Vagina (tissue), 2 donors: ENCODE measurements at regions of chr11 and their contacts with region 1.

Region 1: DNA sequence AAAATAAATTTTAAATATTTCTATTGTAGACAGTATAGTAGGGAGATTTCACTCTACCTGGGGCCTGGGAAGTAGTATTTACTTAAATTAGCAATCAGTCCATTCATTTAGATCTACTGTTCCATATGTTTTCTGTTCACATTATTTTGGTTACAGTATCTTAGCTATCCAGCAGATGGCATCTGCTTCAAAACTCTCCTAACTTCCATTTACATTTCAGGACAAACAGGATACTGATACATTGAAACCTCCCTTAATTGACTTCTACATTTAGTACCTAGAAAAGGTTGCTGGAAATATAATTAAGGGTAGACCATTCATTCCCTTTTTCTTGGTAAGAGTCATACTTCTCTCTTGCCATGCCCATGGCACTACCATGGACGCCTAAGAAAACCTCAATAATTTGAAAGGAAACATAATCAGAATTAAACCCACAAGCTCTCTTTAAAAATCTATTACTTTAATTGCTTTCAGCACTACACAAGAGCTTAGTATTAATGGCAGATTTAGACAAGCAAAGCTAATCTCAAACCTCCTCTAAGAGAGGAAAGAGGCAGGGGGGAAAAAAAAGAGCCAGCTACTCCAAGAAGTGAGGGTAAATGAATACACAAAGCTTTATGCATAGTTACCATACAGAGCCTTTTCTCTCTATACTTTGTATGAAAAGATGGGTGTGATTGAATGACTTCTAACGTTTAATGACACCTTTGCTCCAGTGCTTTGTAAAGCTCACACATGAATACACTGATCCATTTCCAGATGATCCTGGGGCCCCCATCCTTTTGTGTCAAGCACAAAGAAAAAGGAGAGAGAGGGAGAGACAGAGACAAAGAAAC is 131.2 kb upstream of the MTMR2 start:
- DNase-seq: no peak
- H3K4me3 ChIP-seq: no peak overlapping the region
- H3K27ac ChIP-seq: no peak overlapping the region
- H3K4me1 ChIP-seq: peaks cover 27% of the 10 kb centered on the region
- H3K27me3 ChIP-seq: no peaks in the 10 kb centered on the region
- CTCF ChIP-seq: peak in 2 of 3 experiments; percentile 26 to 70
- POLR2A ChIP-seq: no peak

Region 2: GRCh38 chr11:95739108-95739938 is 315.8 kb before region 1 on chr11:
- intact Hi-C with region 1: no loop called
- DNase-seq: no peak
- H3K4me3 ChIP-seq: no peak overlapping the region
- H3K27ac ChIP-seq: no peak overlapping the region
- H3K4me1 ChIP-seq: no peaks in the 10 kb centered on the region
- H3K27me3 ChIP-seq: no peaks in the 10 kb centered on the region
- CTCF ChIP-seq: no peak
- POLR2A ChIP-seq: no peak

Region 3: GRCh38 chr11:96091476-96091875 is 36.4 kb after region 1 on chr11:
- intact Hi-C with region 1: no loop called
- DNase-seq: no peak
- H3K4me3 ChIP-seq: no peak overlapping the region
- H3K27ac ChIP-seq: no peak overlapping the region
- H3K4me1 ChIP-seq: peaks cover 37% of the 10 kb centered on the region
- H3K27me3 ChIP-seq: no peaks in the 10 kb centered on the region
- CTCF ChIP-seq: no peak
- POLR2A ChIP-seq: no peak

Region 4: DNA sequence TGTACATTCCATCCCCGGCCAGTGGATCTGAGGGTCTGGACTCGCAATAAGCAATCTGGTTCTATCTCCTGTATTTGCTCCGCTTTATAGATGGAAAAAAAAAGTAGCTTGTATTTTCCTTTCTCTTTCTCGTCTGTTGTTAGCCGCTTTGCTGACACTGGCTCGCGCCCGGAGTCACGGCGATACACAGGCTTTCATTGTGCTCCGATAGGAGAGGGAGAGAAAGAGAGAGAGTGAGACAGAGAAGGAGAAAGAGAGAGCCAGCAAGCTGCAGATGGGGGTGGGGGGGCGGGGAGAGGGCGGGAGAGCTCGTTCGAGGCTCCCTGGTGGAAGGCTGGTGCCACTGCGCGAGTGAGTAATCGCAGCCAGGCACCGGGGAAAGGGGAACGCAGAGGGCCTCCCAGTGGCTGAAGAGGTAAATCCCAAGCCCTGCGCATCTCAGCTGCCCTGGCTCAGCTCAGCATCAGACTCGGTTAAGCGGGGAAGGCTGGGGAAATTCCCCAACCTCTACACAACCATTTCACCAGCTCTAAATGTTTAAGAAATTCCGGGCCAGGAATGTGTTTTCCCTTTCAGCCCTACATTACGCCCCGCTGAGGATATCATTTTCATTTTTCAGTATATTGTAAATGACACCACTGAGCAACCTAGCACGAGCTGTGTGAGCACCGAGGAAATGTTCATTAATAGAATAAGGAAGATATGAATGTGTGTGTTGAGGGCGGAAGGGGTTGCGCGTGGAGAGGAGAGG is 288.0 kb after region 1 on chr11 and contains the start of gene MAML2:
- intact Hi-C with region 1: loop called (anchors 5 kb)
- DNase-seq: peak in 1 of 2 donors; percentile 96
- H3K4me3 ChIP-seq: peak within 1 kb of the TSS; percentile 68 to 73
- H3K27ac ChIP-seq: peak within 1 kb of the TSS; percentile 84
- H3K4me1 ChIP-seq: peaks cover 37% of the 10 kb centered on the region
- H3K27me3 ChIP-seq: no peaks in the 10 kb centered on the region
- CTCF ChIP-seq: peak; percentile 78 to 92 (median 89)
- POLR2A ChIP-seq: peak in 1 of 2 donors; percentile 16
- total RNA-seq, gene MAML2: 36.3 TPM